Left colon (tissue), 2 donors: ENCODE measurements at regions of chr17 and their contacts with region 1.

Region 1: DNA sequence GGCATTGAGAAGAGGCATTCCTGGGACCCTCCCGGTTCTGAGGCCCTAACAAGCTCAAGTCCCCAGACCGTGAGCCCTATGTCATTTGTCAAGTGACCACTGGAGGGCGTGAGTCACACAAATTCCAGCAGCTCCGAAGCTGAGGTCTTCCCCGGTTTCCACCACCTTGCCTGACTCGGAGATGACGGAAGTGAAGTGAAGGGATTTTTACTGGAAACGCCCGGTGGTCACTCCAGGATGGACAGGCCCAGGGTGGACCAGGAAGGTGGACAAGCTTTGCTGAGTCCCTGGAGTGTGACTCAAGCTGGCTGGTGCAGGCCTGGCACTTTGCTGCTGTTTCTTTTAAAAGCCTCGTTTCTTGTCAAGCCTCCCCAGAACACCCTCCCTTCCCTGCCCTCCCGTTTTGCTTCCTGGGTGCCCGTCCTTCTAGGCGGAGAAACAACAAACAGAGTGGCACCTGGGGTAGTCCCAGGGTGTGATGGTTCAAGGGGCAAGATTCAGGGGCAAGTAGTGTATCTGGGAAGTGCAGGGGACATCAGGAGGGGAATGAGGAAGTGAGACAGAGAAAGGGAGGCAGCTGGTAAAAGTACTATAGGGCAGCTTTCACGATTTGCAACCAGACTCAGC is 5.3 kb upstream of the NOS2 start:
- DNase-seq: peak; percentile 85
- ATAC-seq: peak; percentile 69

Region 2: GRCh38 chr17:27622986-27623385 is 182.6 kb before region 1 on chr17:
- intact Hi-C with region 1: no loop called
- DNase-seq: no peak
- ATAC-seq: no peak

Region 3: DNA sequence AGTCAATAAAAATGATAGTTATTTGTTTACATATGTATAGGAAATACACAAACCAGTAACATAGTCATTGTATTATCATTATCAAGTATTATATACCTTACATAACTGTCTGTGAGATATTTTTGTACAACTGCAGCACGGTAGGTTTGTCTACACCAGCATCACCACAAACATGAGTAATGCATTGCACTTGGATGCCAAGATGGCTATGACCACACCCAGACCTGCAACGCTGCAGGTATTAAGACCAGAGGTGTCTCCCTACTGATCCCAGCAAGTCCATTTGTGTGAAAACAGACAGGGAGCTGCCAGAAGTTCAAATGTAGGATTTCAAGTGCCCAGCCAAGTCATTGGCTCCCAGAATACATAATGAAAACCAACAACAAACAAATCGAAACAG is 28.9 kb after region 1 on chr17:
- intact Hi-C with region 1: no loop called
- DNase-seq: no peak
- ATAC-seq: no peak

Region 4: GRCh38 chr17:27873760-27874159 is 68.1 kb after region 1 on chr17:
- intact Hi-C with region 1: loop called in 1 of 2 experiments (anchors 5 kb)
- DNase-seq: no peak
- ATAC-seq: no peak

Region 5: DNA sequence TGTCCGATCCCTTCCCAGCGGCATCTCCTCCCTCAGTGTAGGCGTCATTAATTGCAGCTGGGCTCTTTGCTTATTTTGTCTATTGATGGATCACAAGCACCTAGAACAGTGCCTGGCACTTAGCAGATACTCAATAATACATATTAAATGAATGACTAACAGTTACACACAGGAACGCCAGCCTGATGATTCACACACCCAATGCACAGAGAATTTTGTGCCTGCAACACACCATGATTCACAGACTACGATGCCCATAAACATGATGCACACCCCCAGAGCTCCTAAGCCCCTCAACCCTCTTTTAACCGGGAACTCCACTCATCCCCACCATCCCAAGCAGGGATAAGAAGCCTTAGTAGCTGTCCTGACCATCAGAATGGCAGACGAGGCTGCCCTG is 446.8 kb after region 1 on chr17:
- intact Hi-C with region 1: loop called in 1 of 2 experiments (anchors 10 kb)
- DNase-seq: no peak
- ATAC-seq: no peak